PC-3 (cell line): ENCODE measurements at regions of chr13 and their contacts with region 1.

Region 1: DNA sequence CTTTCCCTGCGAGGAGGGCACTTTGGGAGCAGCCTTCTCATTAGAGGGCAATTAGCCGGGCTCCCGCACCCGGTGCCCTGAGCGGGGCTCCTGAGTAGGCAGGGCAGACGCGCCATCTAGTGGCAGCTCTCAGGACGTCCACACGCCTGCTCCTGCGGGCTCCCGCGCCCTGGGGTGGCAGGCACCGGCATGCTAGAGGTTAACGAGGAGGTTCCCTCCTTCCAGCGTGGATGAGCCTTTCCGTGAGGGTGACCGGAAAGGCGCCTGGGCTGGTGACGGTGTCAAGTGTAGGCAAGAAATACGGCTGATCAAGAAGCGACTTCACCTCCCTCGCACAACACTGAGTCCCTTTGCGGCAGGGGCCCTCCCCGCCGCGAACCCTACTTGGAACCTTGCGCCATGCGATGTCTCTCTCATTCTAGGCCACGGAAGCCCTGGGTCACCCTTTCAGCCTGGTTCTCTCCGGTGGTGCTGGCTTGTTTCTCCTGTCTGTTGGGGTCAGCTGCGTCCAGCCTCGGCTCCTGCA is 67.7 kb downstream of the ALOX5AP start:
- DNase-seq: peak; percentile 73
- ATAC-seq: peak; percentile 97
- H3K4me3 ChIP-seq: peak overlapping the region; percentile 26; the same call in 1 of the 2 replicates
- H3K27ac ChIP-seq: no peak overlapping the region
- H3K4me1 ChIP-seq: no peaks in the 10 kb centered on the region; the same call in 1 of the 2 replicates
- H3K27me3 ChIP-seq: no peaks in the 10 kb centered on the region
- CTCF ChIP-seq: peak; percentile 89

Region 2: DNA sequence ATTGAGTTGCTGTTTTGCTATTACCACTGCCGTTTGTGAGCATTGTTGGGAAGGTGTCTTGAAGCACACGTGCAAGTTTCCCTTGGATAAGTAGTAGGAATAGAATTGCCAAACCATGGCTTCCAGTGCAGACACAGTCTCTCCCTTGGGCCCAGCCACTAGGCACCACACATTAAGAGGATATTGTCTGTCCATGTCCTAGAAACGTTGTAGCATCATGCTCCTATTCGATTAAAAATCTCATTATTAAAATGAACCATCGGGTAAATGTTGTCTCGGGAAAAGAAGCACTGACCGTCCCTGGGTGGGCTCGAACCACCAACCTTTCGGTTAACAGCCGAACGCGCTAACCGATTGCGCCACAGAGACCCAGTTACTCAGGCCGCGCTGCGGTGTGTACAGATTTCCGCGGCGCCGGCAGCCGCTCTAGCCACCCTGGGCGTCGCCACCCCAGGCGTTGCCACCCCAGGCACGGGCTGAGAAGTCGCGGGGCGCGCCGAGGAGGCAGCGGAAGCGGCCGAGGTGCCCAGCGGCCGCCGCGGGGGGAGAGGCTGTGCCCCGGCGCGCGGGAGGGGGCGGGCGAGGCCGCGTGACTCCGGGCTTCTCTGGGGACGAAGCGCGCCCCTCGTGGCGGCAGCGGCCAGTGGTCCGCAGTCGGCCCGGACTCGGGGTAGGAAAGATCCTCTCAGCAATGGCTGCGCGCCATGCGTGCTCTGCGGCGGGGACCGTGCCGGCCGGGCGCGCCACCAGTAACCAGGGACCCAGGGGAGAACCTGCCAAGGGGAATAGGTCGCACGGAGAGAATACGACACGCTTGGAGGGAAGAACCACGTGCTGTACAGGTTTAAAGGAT is 129.1 kb before region 1 on chr13:
- CTCF ChIA-PET with region 1: no interaction called
- POLR2A ChIA-PET with region 1: no interaction called
- intact Hi-C with region 1: loop called (anchors 2 kb)
- DNase-seq: peak; percentile 83
- ATAC-seq: peak; percentile 85
- H3K4me3 ChIP-seq: peak overlapping the region; percentile 59
- H3K27ac ChIP-seq: no peak overlapping the region
- H3K4me1 ChIP-seq: no peaks in the 10 kb centered on the region; the same call in 1 of the 2 replicates
- H3K27me3 ChIP-seq: no peaks in the 10 kb centered on the region
- CTCF ChIP-seq: no peak; the same call in 1 of the 2 replicates

Region 3: GRCh38 chr13:31706105-31706504 is 903.1 kb after region 1 on chr13:
- CTCF ChIA-PET with region 1: no interaction called
- POLR2A ChIA-PET with region 1: no interaction called
- intact Hi-C with region 1: no loop called
- DNase-seq: no peak
- ATAC-seq: no peak
- H3K4me3 ChIP-seq: no peak overlapping the region
- H3K27ac ChIP-seq: no peak overlapping the region
- H3K4me1 ChIP-seq: no peaks in the 10 kb centered on the region
- H3K27me3 ChIP-seq: peaks cover 18% of the 10 kb centered on the region
- CTCF ChIP-seq: no peak